A549 (cell line): ENCODE measurements at regions of chr14 and their contacts with region 1.

Region 1: GRCh38 chr14:23057757-23058653 is 685 bp upstream of the CDH24 start:
- DNase-seq: peak; percentile 87 to 89
- ATAC-seq: peak; percentile 67 to 79
- H3K4me3 ChIP-seq: peak overlapping the region; percentile 71
- H3K27ac ChIP-seq: peak overlapping the region; percentile 76 to 89
- H3K4me1 ChIP-seq: peaks cover 41% of the 10 kb centered on the region
- CTCF ChIP-seq: peak; percentile 82
- EP300 ChIP-seq: no peak
- POLR2A ChIP-seq: no peak
- RAD21 ChIP-seq: peak; percentile 79 to 81

Region 2: DNA sequence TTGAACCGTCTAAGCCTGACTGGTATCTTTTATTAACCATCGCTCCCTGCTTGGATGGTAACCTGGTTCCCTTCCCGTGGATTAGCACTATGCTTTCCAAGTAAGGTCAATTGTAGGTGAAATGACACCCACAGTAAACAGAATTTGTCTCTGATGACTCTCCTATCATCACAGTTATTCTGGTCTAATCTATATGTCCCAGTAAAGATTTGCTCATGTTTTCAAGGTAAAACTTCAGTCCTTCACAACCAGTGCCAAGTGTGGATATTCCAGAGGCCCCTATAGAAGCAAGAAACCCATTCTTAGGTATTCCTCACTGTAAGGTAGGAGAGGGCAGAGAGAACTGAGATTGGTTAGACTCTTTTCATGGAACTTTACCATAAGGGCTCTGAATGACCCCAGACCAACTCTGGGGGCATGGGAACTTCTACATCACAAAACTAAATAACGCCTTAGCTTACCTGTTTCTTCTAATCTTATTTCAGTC is 91.2 kb before region 1 on chr14:
- CTCF ChIA-PET with region 1: interaction called, 1,206 read pairs
- POLR2A ChIA-PET with region 1: no interaction called
- DNase-seq: no peak
- ATAC-seq: peak; percentile 46 to 52; a peak in 5 of 6 replicates
- H3K4me3 ChIP-seq: no peak overlapping the region
- H3K27ac ChIP-seq: no peak overlapping the region; a peak in 1 of 6 replicates
- H3K4me1 ChIP-seq: peaks cover 11% of the 10 kb centered on the region
- CTCF ChIP-seq: no peak
- EP300 ChIP-seq: no peak
- POLR2A ChIP-seq: no peak
- RAD21 ChIP-seq: no peak

Region 3: GRCh38 chr14:23013054-23013748 is 44.8 kb before region 1 on chr14:
- CTCF ChIA-PET with region 1: interaction called, 64 read pairs
- POLR2A ChIA-PET with region 1: no interaction called
- DNase-seq: no peak
- ATAC-seq: no peak
- H3K4me3 ChIP-seq: no peak overlapping the region
- H3K27ac ChIP-seq: no peak overlapping the region
- H3K4me1 ChIP-seq: peaks cover 6% of the 10 kb centered on the region; the same call in 1 of the 3 replicates
- CTCF ChIP-seq: no peak
- EP300 ChIP-seq: no peak
- POLR2A ChIP-seq: no peak
- RAD21 ChIP-seq: no peak

Region 4: GRCh38 chr14:23041729-23042128 is 16.3 kb before region 1 on chr14:
- CTCF ChIA-PET with region 1: interaction called, 56 read pairs
- POLR2A ChIA-PET with region 1: no interaction called
- DNase-seq: no peak
- ATAC-seq: peak; percentile 20 to 56; a peak in 3 of 6 replicates
- H3K4me3 ChIP-seq: no peak overlapping the region
- H3K27ac ChIP-seq: no peak overlapping the region
- H3K4me1 ChIP-seq: peaks cover 6% of the 10 kb centered on the region; the same call in 1 of the 3 replicates
- CTCF ChIP-seq: no peak
- EP300 ChIP-seq: no peak
- POLR2A ChIP-seq: no peak
- RAD21 ChIP-seq: no peak

Region 5: DNA sequence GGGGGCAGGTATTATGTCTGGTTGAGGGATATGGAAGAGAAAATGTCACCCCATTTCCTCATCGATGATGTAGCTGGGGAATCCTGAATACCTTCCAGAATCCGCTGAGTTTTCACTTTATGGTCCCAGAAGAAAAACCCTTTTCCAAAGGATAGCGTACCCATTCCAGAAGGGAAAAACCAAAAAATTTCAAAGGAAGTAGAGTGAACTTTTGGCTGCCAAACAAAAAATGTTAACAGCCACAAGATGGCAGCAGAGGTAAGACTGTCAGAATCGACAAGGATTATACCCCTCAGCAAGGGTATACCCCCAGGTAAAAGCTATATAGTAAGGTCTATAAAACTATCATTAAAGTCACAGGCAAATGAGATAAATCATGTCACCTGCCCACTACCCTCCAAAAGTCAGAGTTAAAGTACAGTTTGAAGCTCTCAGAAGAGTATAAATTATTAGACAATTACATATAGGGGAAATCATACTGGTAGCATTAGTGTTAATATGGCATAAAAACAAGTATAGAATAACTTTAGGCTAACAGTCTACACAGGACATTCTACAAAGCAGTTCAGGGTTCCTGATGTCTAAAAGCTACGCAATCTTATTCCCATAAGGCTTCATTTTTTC is 18.9 kb after region 1 on chr14:
- CTCF ChIA-PET with region 1: interaction called, 141 read pairs
- POLR2A ChIA-PET with region 1: interaction called, 14 read pairs
- DNase-seq: peak in 1 of 2 experiments; percentile 33
- ATAC-seq: peak; percentile 51 to 55; a peak in 3 of 6 replicates
- H3K4me3 ChIP-seq: no peak overlapping the region
- H3K27ac ChIP-seq: no peak overlapping the region; a peak in 1 of 6 replicates
- H3K4me1 ChIP-seq: peaks cover 49% of the 10 kb centered on the region
- CTCF ChIP-seq: peak; percentile 80
- EP300 ChIP-seq: no peak
- POLR2A ChIP-seq: no peak
- RAD21 ChIP-seq: peak; percentile 48 to 56; a peak in 4 of 5 replicates